GM12878 (cell line): ENCODE measurements at regions of chr15 and their contacts with region 1.

Region 1: DNA sequence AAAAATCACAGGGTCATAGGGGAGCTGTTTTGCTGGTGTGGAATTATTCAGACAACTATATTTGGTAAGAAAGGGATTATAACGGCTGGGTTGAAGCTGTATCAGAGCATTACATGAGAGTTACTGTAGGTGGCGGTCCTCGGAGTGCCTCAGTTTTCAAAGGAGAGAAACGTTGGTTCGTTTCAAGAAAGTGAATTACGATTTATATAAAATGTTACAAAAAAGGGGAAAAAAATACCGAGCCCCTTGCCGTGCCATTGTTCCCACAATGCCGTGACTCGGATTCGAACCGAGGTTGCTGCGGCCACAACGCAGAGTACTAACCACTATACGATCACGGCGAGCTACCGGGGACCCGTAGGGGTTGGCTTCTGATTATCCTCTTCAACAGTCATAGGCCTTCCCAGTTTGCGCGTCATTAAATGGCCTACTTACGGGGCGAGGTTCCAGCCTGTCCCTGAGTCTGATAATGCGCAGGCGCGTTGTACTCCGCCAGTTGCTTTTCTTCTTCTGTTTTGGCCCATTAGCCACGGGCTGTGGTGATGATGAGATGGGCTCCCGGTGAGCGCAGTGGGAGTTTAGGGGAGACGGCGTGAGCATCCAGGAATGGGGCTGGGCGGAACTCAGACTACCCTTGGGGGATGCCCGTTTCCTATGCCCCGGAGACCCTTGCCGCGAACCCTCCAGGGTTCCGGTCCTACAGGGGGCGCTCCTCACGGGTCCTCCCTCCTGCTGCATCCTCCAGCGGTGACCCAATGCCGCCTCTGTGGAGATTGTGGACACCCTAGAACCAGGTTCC is 10.8 kb upstream of the SHF start:
- DNase-seq: peak; percentile 98
- ATAC-seq: peak; percentile 63
- H3K4me3 ChIP-seq: peak overlapping the region; percentile 86
- H3K27ac ChIP-seq: peak overlapping the region; percentile 95
- H3K4me1 ChIP-seq: no peaks in the 10 kb centered on the region; the same call in none of the 2 replicates
- H3K27me3 ChIP-seq: no peaks in the 10 kb centered on the region
- CTCF ChIP-seq: peak; percentile 71 to 81 (median 80)
- EP300 ChIP-seq: peak in 1 of 2 experiments; percentile 90; a peak in 1 of 4 replicates
- POLR2A ChIP-seq: peak; percentile 96
- RAD21 ChIP-seq: no peak

Region 2: DNA sequence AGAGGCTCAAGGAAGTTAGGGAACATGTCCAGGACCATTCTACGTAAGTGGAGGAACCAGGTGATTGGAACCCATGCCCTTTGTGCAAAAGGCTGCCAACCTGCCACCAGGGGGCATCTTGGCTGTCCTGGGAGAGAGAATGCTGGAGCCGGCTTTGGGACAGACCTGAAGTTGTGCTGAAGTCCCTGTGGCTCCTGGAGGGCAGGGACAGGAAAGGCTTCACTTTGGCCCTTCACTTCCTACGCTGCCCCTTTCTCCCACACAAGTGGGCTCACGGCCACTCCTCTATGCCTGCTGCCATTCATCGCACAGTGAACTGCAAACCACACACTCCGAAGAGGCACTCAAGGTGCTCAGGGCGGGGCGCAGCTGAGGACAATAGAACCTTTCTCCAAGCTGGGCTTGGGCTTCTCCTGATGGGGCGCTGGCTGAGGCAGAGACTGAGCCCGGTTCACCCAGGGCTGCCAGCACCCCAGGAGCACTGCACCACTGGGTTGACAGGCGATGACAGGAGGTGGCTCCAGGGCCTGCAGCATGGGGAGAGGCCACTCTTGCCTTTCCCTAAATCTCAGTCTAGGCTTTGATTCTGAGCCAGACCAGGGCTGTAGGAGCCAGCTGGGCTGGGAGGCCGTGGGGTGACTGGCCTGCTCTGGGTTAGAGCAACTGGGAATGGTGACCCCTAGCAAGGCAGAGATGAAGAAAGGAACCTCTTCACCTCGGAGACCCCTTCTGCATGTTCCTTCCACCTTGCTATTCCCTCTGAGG is 19.1 kb before region 1 on chr15:
- CTCF ChIA-PET with region 1: interaction called, 80 read pairs
- POLR2A ChIA-PET with region 1: interaction called, 7 read pairs
- RAD21 ChIA-PET with region 1: interaction called, 6 read pairs
- SMC1A ChIA-PET with region 1: interaction called, 14 read pairs
- in situ Hi-C with region 1: no loop called
- intact Hi-C with region 1: no loop called
- DNase-seq: no peak
- ATAC-seq: peak; percentile 52
- H3K4me3 ChIP-seq: no peak overlapping the region
- H3K27ac ChIP-seq: no peak overlapping the region
- H3K4me1 ChIP-seq: no peaks in the 10 kb centered on the region
- H3K27me3 ChIP-seq: no peaks in the 10 kb centered on the region; a peak in 2 of 4 replicates
- CTCF ChIP-seq: peak; percentile 48 to 70 (median 68)
- EP300 ChIP-seq: no peak
- POLR2A ChIP-seq: no peak
- RAD21 ChIP-seq: peak; percentile 31

Region 3: DNA sequence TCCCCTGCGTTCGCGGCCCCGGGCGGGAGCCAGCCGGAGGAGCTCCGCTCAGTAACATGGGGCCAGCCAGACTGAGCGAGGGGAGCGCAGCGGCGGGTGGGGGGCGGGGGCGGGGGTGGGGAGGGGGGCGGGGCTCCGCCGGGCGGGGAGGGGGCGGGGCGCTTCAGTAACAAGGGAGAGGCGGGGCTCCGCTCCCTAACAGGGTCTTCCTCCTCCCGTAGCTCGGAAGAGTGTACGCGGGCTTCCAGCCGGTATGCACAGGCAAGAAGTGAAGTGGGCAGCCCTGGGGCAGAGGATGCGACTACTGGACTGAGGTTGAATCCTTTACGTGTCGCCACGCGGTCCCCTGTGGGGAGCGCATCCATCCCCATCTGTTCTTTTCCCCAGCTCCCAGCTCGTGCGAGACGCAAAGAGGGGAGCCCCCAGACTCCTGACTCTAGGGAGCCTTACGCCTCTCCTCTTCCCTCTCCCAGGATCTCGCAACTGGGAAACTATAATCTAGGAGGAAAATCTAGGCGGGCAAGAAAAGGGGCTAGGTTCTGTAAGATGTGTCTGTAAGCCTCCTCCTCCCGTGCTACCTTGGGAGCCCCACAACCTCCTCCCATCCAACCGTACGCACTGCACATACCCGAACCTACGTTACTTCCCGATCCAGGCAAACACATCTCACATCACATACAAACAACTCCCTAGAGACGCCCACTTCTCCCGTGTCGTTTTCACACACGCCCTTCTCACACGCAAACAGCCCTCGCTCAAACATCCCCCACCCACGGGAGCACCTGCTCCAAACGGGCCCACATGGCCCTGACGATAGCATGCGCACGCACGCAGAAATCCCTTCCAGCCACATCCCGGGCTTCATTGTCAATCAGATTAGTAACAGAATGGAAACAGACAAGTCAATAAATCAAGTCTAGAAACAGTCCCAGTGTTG is 10.4 kb before region 1 on chr15 and contains the start of gene SHF:
- CTCF ChIA-PET with region 1: interaction called, 17 read pairs
- POLR2A ChIA-PET with region 1: interaction called, 18 read pairs
- RAD21 ChIA-PET with region 1: interaction called, 7 read pairs
- SMC1A ChIA-PET with region 1: interaction called, 7 read pairs
- in situ Hi-C with region 1: no loop called
- intact Hi-C with region 1: no loop called
- DNase-seq: no peak
- ATAC-seq: peak; percentile 75
- H3K4me3 ChIP-seq: peak within 1 kb of the TSS; percentile 80
- H3K27ac ChIP-seq: no peak within 1 kb of the TSS
- H3K4me1 ChIP-seq: peaks cover 4% of the 10 kb centered on the region
- H3K27me3 ChIP-seq: peaks cover 0 to 2% of the 10 kb centered on the region in 2 experiments; a peak in 2 of 4 replicates
- CTCF ChIP-seq: no peak
- EP300 ChIP-seq: peak; percentile 94 to 95; a peak in 3 of 4 replicates
- POLR2A ChIP-seq: peak; percentile 82
- RAD21 ChIP-seq: no peak
- polyA plus RNA-seq, gene SHF: 0.04 TPM in 1 of 2 experiments, not detected in the other

Region 4: DNA sequence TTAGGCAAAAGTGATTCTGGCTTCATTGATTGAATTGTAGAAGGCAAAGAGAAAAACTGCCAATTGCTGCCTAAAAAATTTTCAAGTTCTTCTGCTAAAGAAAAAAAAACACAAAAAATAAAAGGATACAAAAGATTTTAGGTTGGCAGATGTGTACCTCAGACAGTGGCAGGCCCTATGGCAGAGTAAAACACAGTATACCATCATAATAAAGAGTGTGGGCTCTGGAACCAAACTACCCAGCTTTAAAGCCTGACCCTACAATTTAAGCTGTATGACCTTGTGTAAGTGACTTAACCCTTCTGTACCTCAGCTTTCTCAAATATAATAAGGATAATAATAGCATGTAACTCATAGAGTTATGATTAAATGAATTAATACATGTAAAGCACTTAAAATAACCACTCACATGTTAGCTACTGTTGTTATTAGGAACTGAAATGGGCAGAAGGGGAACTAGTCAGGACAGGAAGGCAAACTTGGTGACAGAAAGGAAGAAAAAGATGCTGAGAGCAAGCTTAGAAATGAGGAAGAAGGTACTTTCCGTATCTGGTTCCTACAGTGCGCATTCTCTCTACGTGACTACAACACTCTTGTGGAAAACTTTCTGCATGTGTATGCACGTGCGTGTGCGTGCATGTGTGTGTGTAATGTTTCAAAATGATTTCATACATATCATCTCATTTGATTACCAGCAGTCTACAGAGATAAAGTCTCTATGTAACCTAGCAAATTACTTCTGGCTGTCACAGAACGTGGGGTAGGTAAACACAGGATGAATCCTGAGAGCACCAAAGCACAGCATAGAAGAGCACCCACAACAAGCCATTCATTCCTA is 193.4 kb after region 1 on chr15:
- CTCF ChIA-PET with region 1: interaction called, 211 read pairs
- POLR2A ChIA-PET with region 1: interaction called, 6 read pairs
- RAD21 ChIA-PET with region 1: interaction called, 87 read pairs
- SMC1A ChIA-PET with region 1: interaction called, 111 read pairs
- in situ Hi-C with region 1: loop called (anchors 5 kb)
- intact Hi-C with region 1: no loop called
- DNase-seq: peak; percentile 90
- ATAC-seq: peak; percentile 96
- H3K4me3 ChIP-seq: 0 out of 2 replicates have a peak overlapping the region, but pooled peaks have one; percentile 11
- H3K27ac ChIP-seq: peak overlapping the region; percentile 72
- H3K4me1 ChIP-seq: peaks cover 21% of the 10 kb centered on the region
- H3K27me3 ChIP-seq: no peaks in the 10 kb centered on the region
- CTCF ChIP-seq: no peak
- EP300 ChIP-seq: peak; percentile 76 to 85
- POLR2A ChIP-seq: no peak
- RAD21 ChIP-seq: no peak

Region 5: GRCh38 chr15:45572617-45573016 is 374.1 kb after region 1 on chr15:
- CTCF ChIA-PET with region 1: no interaction called
- POLR2A ChIA-PET with region 1: no interaction called
- RAD21 ChIA-PET with region 1: no interaction called
- SMC1A ChIA-PET with region 1: no interaction called
- in situ Hi-C with region 1: no loop called
- intact Hi-C with region 1: no loop called
- DNase-seq: no peak
- ATAC-seq: no peak
- H3K4me3 ChIP-seq: no peak overlapping the region
- H3K27ac ChIP-seq: no peak overlapping the region
- H3K4me1 ChIP-seq: no peaks in the 10 kb centered on the region
- H3K27me3 ChIP-seq: no peaks in the 10 kb centered on the region
- CTCF ChIP-seq: no peak
- EP300 ChIP-seq: no peak
- POLR2A ChIP-seq: no peak
- RAD21 ChIP-seq: no peak

Region 6: GRCh38 chr15:45587095-45587860 is 388.7 kb after region 1 on chr15 and contains the start of gene BLOC1S6:
- CTCF ChIA-PET with region 1: interaction called, 7 read pairs
- POLR2A ChIA-PET with region 1: no interaction called
- RAD21 ChIA-PET with region 1: no interaction called
- SMC1A ChIA-PET with region 1: interaction called, 7 read pairs
- in situ Hi-C with region 1: loop called (anchors 10 kb)
- intact Hi-C with region 1: no loop called
- DNase-seq: peak; percentile 74
- ATAC-seq: peak; percentile 93
- H3K4me3 ChIP-seq: peak within 1 kb of the TSS; percentile 97
- H3K27ac ChIP-seq: peak within 1 kb of the TSS; percentile 85
- H3K4me1 ChIP-seq: peaks cover 4% of the 10 kb centered on the region; the same call in 1 of the 2 replicates
- H3K27me3 ChIP-seq: no peaks in the 10 kb centered on the region
- CTCF ChIP-seq: no peak
- EP300 ChIP-seq: peak in 1 of 2 experiments; percentile 10; a peak in 1 of 4 replicates
- POLR2A ChIP-seq: peak; percentile 99
- RAD21 ChIP-seq: no peak
- polyA plus RNA-seq, gene BLOC1S6: 13.5 to 16.9 TPM

Region 7: GRCh38 chr15:45634442-45635190 is 436.1 kb after region 1 on chr15 and contains the start of gene SQOR:
- CTCF ChIA-PET with region 1: no interaction called
- POLR2A ChIA-PET with region 1: no interaction called
- RAD21 ChIA-PET with region 1: no interaction called
- SMC1A ChIA-PET with region 1: no interaction called
- in situ Hi-C with region 1: no loop called
- intact Hi-C with region 1: loop called (anchors 10 kb)
- DNase-seq: peak; percentile 59
- ATAC-seq: peak; percentile 86
- H3K4me3 ChIP-seq: peak within 1 kb of the TSS; percentile 86
- H3K27ac ChIP-seq: peak within 1 kb of the TSS; percentile 74
- H3K4me1 ChIP-seq: peaks cover 30% of the 10 kb centered on the region
- H3K27me3 ChIP-seq: no peaks in the 10 kb centered on the region
- CTCF ChIP-seq: no peak
- EP300 ChIP-seq: 0 out of 4 replicates have a peak, but pooled peaks of 1 of the 2 experiments have one; percentile 8
- POLR2A ChIP-seq: peak; percentile 88
- RAD21 ChIP-seq: no peak
- polyA plus RNA-seq, gene SQOR: 14.5 to 25.6 TPM